ENCODE measurements at regions of chr19 and their contacts with region 1.

Region 1: DNA sequence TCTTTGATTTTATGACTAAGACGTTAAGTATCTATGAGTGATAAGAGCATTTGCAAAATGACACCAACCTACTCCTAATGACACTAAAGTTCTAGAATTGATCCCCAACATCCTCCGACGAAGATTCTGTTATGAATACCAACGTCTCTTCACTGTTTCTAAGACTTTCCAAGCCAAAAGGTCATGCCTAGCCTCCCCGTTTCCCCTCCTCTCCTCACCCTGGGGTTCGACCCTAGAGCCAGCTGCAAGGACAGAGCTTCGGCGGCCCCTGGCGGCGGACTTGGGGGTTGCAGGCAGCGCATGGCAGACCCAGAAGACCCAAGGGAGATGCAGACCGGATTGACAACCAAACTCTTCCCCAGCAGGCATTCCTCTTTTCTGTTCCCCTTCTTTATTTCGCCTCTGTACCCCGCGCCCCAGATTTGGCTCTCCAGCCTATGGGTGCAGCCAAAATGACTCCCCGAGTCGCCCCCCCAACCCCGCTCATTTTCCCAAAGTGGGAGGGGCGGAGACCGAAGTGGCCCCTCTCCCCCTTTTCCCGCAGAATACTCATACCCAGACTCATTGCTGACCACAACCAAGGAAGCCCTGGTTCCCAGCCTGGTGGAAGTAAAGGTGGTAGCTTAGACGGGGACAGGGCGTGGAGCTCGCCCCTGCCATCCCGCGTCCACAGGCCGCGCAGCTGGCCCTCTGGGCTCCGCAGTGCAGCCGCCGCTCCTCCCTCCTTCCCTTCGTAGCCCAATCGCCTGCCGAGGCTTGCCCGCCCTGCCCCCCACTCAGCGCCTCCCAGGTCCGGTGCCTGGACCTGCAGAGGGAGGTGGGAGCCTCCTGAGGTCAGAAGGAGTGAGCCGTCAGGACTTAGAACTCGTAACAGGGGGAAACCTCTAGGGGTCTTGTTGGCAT is 4.1 kb upstream of the EML2 start:
- DNase-seq: peak; percentile 92
- H3K4me3 ChIP-seq: no peak overlapping the region
- H3K27ac ChIP-seq: peak overlapping the region; percentile 83 to 90 (median 86)
- H3K4me1 ChIP-seq: peaks cover 3 to 54% (median 51%) of the 10 kb centered on the region in 4 donors
- H3K27me3 ChIP-seq: peaks cover 38% of the 10 kb centered on the region
- CTCF ChIP-seq: peak; percentile 98 to 100 (median 98)
- EP300 ChIP-seq: no peak
- POLR2A ChIP-seq: no peak

Region 2: DNA sequence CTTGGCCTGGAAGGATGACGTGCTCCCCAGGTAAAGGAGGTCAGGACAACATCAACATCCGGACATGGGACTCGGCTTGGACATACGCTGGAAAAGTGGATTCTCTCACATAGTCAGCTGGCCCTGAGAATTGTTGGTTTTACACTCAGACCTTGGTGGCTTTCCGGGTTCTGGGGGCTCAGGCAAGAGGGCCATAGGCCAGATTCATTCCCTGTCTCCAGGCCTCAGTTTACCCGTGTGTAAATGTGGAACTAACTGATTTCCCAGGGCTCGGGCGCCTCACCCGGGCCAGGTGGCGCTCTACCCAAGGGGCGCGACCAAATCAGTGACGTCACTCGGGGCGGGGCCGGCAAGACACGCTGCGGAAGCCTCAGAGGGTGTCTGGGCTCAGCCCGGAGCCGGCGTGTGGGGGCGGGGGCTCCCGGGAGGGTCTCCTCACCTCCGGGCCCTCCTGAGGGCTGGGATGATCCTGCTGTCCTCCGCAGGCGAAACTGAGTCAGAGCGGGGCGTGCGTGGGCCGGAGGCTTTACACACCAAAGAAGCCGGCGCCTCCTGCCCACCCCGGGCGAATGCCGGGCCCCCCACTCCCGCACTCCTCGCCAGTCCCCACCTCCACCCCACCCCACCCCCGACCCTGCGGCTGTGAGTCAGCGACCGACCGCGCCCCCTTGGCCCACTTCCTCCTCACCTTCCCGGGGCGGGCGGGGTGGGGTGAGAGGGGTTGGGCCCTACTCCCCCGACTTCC is 136.9 kb before region 1 on chr19:
- in situ Hi-C with region 1: no loop called
- intact Hi-C with region 1: no loop called
- DNase-seq: peak; percentile 98
- H3K4me3 ChIP-seq: peak overlapping the region; percentile 93 to 100 (median 97)
- H3K27ac ChIP-seq: peak overlapping the region; percentile 98 to 100 (median 99)
- H3K4me1 ChIP-seq: peaks cover 16 to 29% (median 27%) of the 10 kb centered on the region in 4 donors
- H3K27me3 ChIP-seq: no peaks in the 10 kb centered on the region
- CTCF ChIP-seq: peak in 4 of 5 experiments; percentile 24 to 45 (median 38)
- EP300 ChIP-seq: no peak
- POLR2A ChIP-seq: peak; percentile 90

Region 3: GRCh38 chr19:45607071-45608029 is 35.9 kb before region 1 on chr19:
- in situ Hi-C with region 1: no loop called
- intact Hi-C with region 1: loop called (anchors 2 kb)
- DNase-seq: peak; percentile 77
- H3K4me3 ChIP-seq: no peak overlapping the region
- H3K27ac ChIP-seq: no peak overlapping the region
- H3K4me1 ChIP-seq: peaks cover 5 to 8% (median 8%) of the 10 kb centered on the region in 4 donors
- H3K27me3 ChIP-seq: peaks cover 18% of the 10 kb centered on the region
- CTCF ChIP-seq: peak; percentile 88 to 93 (median 90)
- EP300 ChIP-seq: no peak
- POLR2A ChIP-seq: no peak